ENCODE measurements at regions of chr17 and their contacts with region 1.

Region 1: GRCh38 chr17:1684378-1685189 is at the start of gene PRPF8:
- DNase-seq: peak; percentile 99
- H3K4me3 ChIP-seq: peak within 1 kb of the TSS; percentile 71 to 95 (median 77)
- H3K27ac ChIP-seq: peak within 1 kb of the TSS; percentile 54
- H3K4me1 ChIP-seq: peaks cover 8% of the 10 kb centered on the region
- H3K27me3 ChIP-seq: no peaks in the 10 kb centered on the region
- CTCF ChIP-seq: no peak
- POLR2A ChIP-seq: peak; percentile 88
- total RNA-seq, gene PRPF8: 282 and 301 TPM in 2 replicates

Region 2: GRCh38 chr17:1438593-1439083 is 245.9 kb before region 1 on chr17:
- CTCF ChIA-PET with region 1: no interaction called
- POLR2A ChIA-PET with region 1: no interaction called
- dilution Hi-C with region 1: no loop called
- intact Hi-C with region 1: no loop called
- DNase-seq: no peak
- H3K4me3 ChIP-seq: no peak overlapping the region
- H3K27ac ChIP-seq: no peak overlapping the region
- H3K4me1 ChIP-seq: no peaks in the 10 kb centered on the region
- H3K27me3 ChIP-seq: no peaks in the 10 kb centered on the region
- CTCF ChIP-seq: no peak
- POLR2A ChIP-seq: no peak

Region 3: GRCh38 chr17:1697681-1698080 is 13.1 kb after region 1 on chr17:
- CTCF ChIA-PET with region 1: no interaction called
- POLR2A ChIA-PET with region 1: no interaction called
- dilution Hi-C with region 1: no loop called
- intact Hi-C with region 1: no loop called
- DNase-seq: peak; percentile 26
- H3K4me3 ChIP-seq: no peak overlapping the region
- H3K27ac ChIP-seq: no peak overlapping the region
- H3K4me1 ChIP-seq: peaks cover 5% of the 10 kb centered on the region
- H3K27me3 ChIP-seq: no peaks in the 10 kb centered on the region
- CTCF ChIP-seq: no peak
- POLR2A ChIP-seq: no peak

Region 4: DNA sequence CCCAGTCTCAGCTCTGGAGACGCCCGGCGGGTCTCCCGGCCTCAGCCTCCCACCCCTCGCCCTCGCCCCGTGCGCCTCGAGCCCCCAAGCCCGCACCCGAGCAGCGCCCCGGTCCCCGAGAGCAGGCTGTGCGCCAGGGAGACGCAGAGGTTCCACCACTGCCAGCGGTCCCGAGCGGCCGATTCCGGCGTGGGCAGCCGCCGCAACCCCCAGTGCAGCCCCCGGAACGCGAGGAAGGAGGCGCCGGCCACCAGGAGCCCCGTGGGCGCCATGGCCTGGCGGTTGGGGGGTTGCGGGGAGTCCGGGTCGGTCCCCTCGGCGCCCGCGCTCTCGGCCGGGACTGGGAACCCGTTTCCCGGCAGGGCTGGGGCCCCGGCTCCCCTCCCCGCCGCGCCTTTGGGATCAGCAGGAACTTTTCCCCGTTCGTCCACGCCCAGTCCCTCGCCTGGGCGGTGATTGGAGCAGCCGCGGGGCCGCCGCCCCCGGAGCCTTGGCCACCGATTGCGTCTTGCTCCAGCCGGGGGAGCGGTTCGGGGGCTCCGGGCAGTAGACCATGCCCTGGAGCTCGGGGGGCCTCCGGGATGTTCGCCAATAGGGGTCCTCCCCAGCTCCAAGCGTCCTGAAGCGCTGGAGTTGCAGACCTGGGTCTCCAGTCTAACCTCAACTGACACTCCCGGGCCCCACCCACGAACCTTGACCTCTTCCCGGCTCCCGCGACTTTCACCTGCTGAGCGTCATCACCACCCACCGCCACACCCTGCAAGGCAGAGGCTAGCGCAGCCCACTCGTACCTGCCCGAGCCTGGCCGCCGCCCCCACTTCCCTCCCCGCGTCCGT is 25.6 kb after region 1 on chr17 and contains the start of gene TLCD2:
- CTCF ChIA-PET with region 1: interaction called, 5 read pairs
- POLR2A ChIA-PET with region 1: interaction called, 11 read pairs
- dilution Hi-C with region 1: no loop called
- intact Hi-C with region 1: loop called (anchors 1 kb)
- DNase-seq: peak; percentile 62
- H3K4me3 ChIP-seq: peak within 1 kb of the TSS; percentile 51 to 61 (median 53)
- H3K27ac ChIP-seq: no peak within 1 kb of the TSS
- H3K4me1 ChIP-seq: peaks cover 36% of the 10 kb centered on the region
- H3K27me3 ChIP-seq: no peaks in the 10 kb centered on the region
- CTCF ChIP-seq: no peak
- POLR2A ChIP-seq: peak; percentile 77
- total RNA-seq, gene TLCD2: 1.7 and 2.1 TPM in 2 replicates

Measured in endothelial cell of umbilical vein (primary cell).